Heart left ventricle (tissue), 16 donors: ENCODE measurements at regions of chr15 and their contacts with region 1.

Region 1: DNA sequence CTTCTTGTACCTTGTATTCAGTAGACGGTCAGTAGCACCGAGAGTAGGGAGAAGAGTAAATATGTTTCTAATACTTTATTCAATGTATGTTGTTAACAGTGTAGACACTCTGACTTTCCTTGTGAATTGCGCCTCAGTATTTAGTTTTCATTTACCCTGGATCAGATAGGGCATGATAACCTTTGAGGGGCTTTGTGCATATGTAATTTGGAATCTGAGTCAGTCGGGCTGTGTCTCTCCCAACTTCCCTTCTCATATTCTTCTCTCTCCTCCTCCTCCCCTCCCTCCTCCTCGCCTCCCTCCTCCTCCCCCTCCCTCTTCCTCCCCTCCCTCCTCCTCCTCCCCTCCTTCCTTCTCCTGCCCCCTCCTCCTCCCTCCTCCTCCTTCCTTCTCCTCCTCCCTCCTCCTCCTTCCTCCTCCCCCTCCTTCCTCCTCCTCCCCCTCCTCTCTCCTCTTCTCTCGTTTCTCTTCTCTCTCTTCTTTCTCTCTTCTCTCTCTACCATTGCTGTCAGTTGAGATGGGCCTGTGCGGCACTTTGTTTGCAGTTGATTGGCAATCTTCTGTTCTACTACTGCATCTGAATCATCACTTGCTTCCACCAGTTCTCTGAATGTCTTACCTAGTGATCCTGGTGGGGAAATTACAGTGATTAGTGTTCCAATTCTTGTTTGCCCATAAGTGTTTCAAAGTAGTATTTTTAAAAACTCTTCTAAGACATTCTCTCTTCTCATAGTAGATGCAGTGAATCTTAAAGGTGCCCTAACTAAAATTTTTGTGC is 162.3 kb downstream of the PGPEP1L start:
- DNase-seq: no peak
- ATAC-seq: peak in 2 of 4 donors; percentile 15 to 29
- H3K4me3 ChIP-seq: no peak overlapping the region
- H3K27ac ChIP-seq: no peak overlapping the region
- H3K4me1 ChIP-seq: peaks cover 0 to 59% (median 30%) of the 10 kb centered on the region in 12 donors
- H3K27me3 ChIP-seq: no peaks in the 10 kb centered on the region
- CTCF ChIP-seq: no peak
- POLR2A ChIP-seq: no peak

Region 2: GRCh38 chr15:98525661-98526001 is 319.7 kb before region 1 on chr15:
- intact Hi-C with region 1: loop called in 2 of 10 experiments (anchors 5 to 10 kb)
- DNase-seq: no peak
- ATAC-seq: peak in 1 of 4 donors; percentile 32
- H3K4me3 ChIP-seq: peak overlapping the region in 1 of 12 donors; percentile 19
- H3K27ac ChIP-seq: no peak overlapping the region
- H3K4me1 ChIP-seq: no peaks in the 10 kb centered on the region
- H3K27me3 ChIP-seq: peaks cover 0 to 10% (median 0%) of the 10 kb centered on the region in 9 donors
- CTCF ChIP-seq: no peak
- POLR2A ChIP-seq: no peak

Region 3: DNA sequence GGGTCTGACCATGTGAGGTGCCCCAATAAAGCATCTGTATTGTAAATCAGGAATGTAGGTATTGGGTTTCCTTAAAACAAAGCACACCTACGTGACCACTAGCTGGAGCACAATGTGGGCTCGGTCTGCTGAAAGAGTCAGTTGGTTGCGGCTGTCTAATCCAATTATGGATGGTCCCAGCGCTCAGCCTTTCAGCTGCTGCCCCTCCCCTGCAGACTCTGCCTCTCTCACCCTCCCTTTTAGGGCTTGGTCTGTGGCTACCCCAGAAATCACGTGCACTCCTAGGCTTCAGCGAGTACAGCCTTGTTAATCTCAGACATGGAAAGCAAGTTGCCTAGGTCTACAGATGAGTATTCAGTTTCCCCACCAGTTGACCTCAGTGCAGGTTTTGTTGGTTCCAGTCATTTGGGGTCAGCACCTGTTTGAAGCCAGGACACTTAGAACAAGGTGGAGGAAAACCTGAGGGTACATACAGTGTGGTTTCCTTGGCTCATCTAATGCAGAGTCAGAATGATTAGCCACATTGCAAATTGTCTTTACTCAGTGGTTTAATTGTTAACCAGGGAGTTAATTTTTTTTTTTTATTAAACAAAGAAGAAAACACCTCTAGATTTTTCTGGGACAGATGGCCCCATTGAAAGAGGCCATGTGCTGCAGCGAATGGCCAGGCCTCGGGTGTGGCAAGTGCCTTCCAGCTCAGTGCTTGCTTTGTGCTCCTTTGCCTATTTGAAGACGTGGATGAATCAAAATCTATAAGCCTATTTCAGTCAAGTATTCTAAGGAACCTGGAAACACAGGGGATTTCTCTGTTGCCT is 59.3 kb before region 1 on chr15:
- intact Hi-C with region 1: loop called in 2 of 10 experiments (anchors 2 to 5 kb)
- DNase-seq: peak in 4 of 5 donors; percentile 48 to 63 (median 56)
- ATAC-seq: peak; percentile 77 to 88 (median 86)
- H3K4me3 ChIP-seq: no peak overlapping the region
- H3K27ac ChIP-seq: peak overlapping the region in 9 of 12 donors; percentile 4 to 75 (median 55)
- H3K4me1 ChIP-seq: peaks cover 4 to 65% (median 37%) of the 10 kb centered on the region in 12 donors
- H3K27me3 ChIP-seq: no peaks in the 10 kb centered on the region
- CTCF ChIP-seq: no peak
- POLR2A ChIP-seq: no peak

Region 4: GRCh38 chr15:98800437-98801233 is 44.7 kb before region 1 on chr15:
- intact Hi-C with region 1: loop called in 4 of 10 experiments (anchors 5 kb)
- DNase-seq: peak in 3 of 5 donors; percentile 36 to 51 (median 38)
- ATAC-seq: peak; percentile 63 to 88 (median 84)
- H3K4me3 ChIP-seq: peak overlapping the region in 5 of 12 donors; percentile 2 to 28 (median 10)
- H3K27ac ChIP-seq: peak overlapping the region in 11 of 12 donors; percentile 11 to 70 (median 52)
- H3K4me1 ChIP-seq: peaks cover 6 to 67% (median 35%) of the 10 kb centered on the region in 12 donors
- H3K27me3 ChIP-seq: no peaks in the 10 kb centered on the region
- CTCF ChIP-seq: no peak
- POLR2A ChIP-seq: no peak

Region 5: GRCh38 chr15:98805434-98806274 is 39.6 kb before region 1 on chr15:
- intact Hi-C with region 1: loop called in 4 of 10 experiments (anchors 5 kb)
- DNase-seq: no peak
- ATAC-seq: no peak
- H3K4me3 ChIP-seq: no peak overlapping the region
- H3K27ac ChIP-seq: no peak overlapping the region
- H3K4me1 ChIP-seq: peaks cover 6 to 61% (median 37%) of the 10 kb centered on the region in 12 donors
- H3K27me3 ChIP-seq: no peaks in the 10 kb centered on the region
- CTCF ChIP-seq: peak in 1 of 12 donors; percentile 15
- POLR2A ChIP-seq: no peak

Region 6: GRCh38 chr15:98823012-98823458 is 22.3 kb before region 1 on chr15:
- intact Hi-C with region 1: no loop called
- DNase-seq: no peak
- ATAC-seq: peak in 2 of 4 donors; percentile 51 to 61
- H3K4me3 ChIP-seq: no peak overlapping the region
- H3K27ac ChIP-seq: no peak overlapping the region
- H3K4me1 ChIP-seq: peaks cover 0 to 25% (median 10%) of the 10 kb centered on the region in 12 donors
- H3K27me3 ChIP-seq: no peaks in the 10 kb centered on the region
- CTCF ChIP-seq: no peak
- POLR2A ChIP-seq: no peak